ENCODE measurements at regions of chr11 and their contacts with region 1.

Region 1: GRCh38 chr11:74570266-74571061 is 21.9 kb upstream of the POLD3 start:
- DNase-seq: no peak
- ATAC-seq: peak; percentile 56

Region 2: DNA sequence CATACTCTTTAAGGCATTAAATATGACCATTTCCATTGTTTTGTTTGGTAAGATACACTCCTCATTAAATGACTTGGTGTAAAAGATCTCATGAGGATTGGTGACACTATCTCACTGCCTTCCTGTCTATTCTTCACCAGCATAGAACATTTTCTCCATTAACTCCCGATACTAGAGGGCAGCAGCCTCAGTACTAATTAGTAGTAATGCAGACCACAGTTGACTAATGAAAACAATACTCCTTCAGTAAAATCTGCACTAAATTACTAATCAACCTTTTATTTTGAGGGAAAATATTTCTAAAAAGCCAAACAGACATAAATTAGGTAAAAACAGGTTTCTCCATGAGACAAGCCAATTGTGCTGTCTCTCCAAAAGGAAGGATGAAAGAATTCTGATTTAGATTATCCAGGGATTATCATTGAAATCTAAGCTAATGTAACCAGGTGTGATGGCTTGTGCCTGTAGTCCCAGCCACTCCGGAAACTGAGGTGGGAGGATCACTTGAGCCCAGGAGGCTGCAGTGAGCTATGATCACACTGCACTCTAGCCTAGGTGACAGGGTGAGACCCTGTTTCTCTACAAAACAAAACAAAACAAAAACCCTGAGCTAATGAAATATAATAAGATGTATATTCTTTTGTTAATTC is 181.7 kb before region 1 on chr11:
- intact Hi-C with region 1: loop called (anchors 5 kb)
- DNase-seq: no peak
- ATAC-seq: no peak

Region 3: DNA sequence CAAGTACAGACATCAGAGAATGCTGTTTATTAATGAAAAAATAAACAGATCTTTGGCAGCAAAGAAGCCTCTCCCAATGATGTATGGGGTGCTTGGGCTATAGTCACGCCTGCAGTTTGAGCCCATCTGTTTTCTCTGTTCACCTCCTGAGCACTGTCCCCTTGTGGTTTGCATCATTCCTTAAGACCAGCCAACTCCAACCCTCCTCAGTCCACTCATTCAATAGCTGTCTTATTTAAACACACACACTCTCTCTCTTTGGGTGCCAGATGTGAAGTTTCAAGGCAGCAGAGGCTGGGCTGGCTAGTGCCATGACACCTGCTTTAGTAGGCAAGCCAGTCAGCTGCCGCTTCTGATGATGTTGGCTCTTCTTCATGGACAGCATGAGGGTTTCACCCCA is 80.0 kb after region 1 on chr11:
- intact Hi-C with region 1: no loop called
- DNase-seq: peak; percentile 74
- ATAC-seq: peak; percentile 93